ENCODE measurements at regions of chr16 and their contacts with region 1.

Region 1: GRCh38 chr16:86158688-86159360 is 259.9 kb downstream of the IRF8 start:
- ATAC-seq: no peak
- H3K4me3 ChIP-seq: no peak overlapping the region
- H3K27ac ChIP-seq: no peak overlapping the region
- H3K4me1 ChIP-seq: no peaks in the 10 kb centered on the region

Region 2: DNA sequence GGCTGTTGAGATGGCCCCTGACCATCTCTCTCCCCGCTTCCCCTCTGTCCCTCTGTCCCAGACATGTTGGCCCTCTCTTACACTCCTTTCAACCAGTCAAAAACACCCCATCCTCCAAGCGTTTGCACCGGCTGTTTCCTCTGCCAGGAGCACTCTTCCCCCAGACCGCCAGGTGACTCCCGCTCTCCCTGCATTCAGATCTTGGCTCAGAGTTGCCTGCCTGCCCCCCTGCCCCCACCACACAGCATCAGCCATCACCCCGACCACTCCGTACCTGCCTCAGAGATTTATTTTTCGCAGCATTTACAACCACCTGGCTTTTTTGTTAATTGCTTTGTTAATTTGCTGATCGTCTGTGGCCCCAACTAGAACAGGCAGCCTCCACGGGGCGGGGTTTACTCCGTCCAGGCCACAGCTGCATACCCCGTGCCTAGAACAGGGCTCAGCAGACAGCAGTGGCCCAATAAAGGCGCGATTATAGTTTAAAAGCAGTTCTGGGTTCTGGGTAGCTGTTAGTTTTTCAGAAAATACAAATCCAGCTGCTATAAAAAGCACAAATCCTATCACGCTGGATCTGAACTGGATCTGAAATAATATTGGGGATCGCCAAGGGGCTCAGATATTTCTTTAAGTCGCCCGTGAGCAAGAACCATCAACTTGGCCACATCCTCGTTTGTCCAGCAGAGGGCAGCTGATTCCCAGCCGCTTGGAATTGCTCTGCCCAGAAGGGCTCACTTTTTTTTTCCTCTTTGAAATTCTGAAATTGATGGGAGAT is 86.3 kb before region 1 on chr16:
- in situ Hi-C with region 1: loop called in 1 of 9 experiments (anchors 25 kb)
- ATAC-seq: peak; percentile 49 to 78 (median 67)
- H3K4me3 ChIP-seq: no peak overlapping the region
- H3K27ac ChIP-seq: no peak overlapping the region
- H3K4me1 ChIP-seq: peaks cover 0 to 12% of the 10 kb centered on the region in 2 donors

Region 3: DNA sequence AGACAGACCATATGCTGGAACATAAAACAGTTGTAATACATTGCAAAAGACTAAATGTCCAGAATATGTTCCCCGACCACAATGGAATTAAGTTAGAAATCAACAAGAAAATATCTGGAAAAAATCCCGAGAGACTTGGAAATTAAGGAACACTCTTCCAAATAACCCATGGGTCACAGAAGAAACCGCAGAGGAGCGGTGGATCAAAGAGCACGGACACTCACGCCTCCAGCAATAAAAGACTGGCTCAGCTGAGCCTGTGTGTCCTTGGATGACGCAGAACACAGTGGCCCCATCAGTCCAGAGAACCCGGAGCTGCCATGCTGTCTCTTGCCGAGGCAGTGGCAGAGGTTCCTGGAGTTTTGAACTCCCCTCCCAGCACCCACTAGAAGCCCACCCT is 320.6 kb after region 1 on chr16:
- in situ Hi-C with region 1: no loop called
- ATAC-seq: no peak
- H3K4me3 ChIP-seq: no peak overlapping the region
- H3K27ac ChIP-seq: no peak overlapping the region
- H3K4me1 ChIP-seq: no peaks in the 10 kb centered on the region